Panc1 (cell line): ENCODE measurements at regions of chr4 and their contacts with region 1.

Region 1: GRCh38 chr4:83114576-83114975 is at the start of gene PLAC8:
- DNase-seq: peak; percentile 79
- ATAC-seq: peak; percentile 66
- H3K4me3 ChIP-seq: peak within 1 kb of the TSS; percentile 67 to 74
- H3K27ac ChIP-seq: peak within 1 kb of the TSS; percentile 99
- H3K4me1 ChIP-seq: peaks cover 29% of the 10 kb centered on the region
- H3K27me3 ChIP-seq: no peaks in the 10 kb centered on the region
- CTCF ChIP-seq: no peak
- total RNA-seq, gene PLAC8: 154 TPM

Region 2: GRCh38 chr4:83252782-83253405 is 138.3 kb after region 1 on chr4:
- CTCF ChIA-PET with region 1: no interaction called
- POLR2A ChIA-PET with region 1: interaction called, 14 read pairs
- in situ Hi-C with region 1: no loop called
- intact Hi-C with region 1: loop called (anchors 1 kb)
- DNase-seq: peak; percentile 48
- ATAC-seq: no peak
- H3K4me3 ChIP-seq: no peak overlapping the region
- H3K27ac ChIP-seq: peak overlapping the region; percentile 86
- H3K4me1 ChIP-seq: peaks cover 36% of the 10 kb centered on the region
- H3K27me3 ChIP-seq: no peaks in the 10 kb centered on the region
- CTCF ChIP-seq: peak; percentile 83

Region 3: DNA sequence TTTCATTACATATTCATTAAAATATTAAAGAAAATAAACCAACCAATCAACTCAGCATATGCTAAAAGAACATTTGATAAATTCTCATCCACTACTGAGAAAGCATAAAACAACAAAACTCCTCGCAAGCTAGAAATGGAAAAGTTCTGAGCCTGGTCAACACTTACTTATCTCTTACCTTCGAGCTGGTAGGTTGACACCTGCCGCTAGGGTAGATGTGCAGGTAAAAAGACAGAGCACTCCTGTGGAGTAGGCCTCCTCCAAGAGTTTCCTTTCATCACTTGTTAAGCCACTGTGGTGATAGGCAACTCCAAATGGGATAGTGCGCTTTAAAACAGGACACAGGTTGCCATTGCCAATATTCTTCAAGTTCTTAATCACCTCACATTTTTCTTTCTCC is 322.1 kb after region 1 on chr4:
- CTCF ChIA-PET with region 1: interaction called, 10 read pairs
- POLR2A ChIA-PET with region 1: no interaction called
- in situ Hi-C with region 1: no loop called
- intact Hi-C with region 1: no loop called
- DNase-seq: no peak
- ATAC-seq: no peak
- H3K4me3 ChIP-seq: no peak overlapping the region
- H3K27ac ChIP-seq: no peak overlapping the region
- H3K4me1 ChIP-seq: no peaks in the 10 kb centered on the region
- H3K27me3 ChIP-seq: no peaks in the 10 kb centered on the region
- CTCF ChIP-seq: no peak